IMR-90 (cell line): ENCODE measurements at regions of chr9 and their contacts with region 1.

Region 1: DNA sequence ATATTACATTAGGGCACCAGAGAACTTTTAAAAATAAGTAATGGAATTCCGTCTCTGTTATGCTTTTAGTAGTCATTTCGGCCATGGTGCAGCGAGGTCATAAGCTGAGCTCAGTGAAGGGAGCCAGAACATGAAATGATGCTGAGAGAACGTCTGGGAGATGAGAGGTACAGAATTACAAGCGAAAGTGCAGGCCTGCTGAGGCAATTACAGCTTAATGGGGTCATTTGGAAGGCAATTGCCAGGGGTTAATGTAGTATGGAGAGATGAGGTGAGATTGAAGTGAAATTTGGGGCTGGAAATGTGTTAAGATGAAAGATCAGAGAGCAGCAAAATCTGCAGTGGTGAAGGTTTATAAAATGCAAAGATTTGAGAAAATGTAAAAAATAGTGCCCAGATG is 96.5 kb downstream of the PBX3 start:
- DNase-seq: peak; percentile 60
- ATAC-seq: 0 out of 2 replicates have a peak, but pooled peaks have one; percentile 61
- H3K4me3 ChIP-seq: no peak overlapping the region
- H3K27ac ChIP-seq: no peak overlapping the region
- H3K4me1 ChIP-seq: no peaks in the 10 kb centered on the region
- H3K27me3 ChIP-seq: no peaks in the 10 kb centered on the region
- CTCF ChIP-seq: no peak
- POLR2A ChIP-seq: no peak
- RAD21 ChIP-seq: no peak

Region 2: DNA sequence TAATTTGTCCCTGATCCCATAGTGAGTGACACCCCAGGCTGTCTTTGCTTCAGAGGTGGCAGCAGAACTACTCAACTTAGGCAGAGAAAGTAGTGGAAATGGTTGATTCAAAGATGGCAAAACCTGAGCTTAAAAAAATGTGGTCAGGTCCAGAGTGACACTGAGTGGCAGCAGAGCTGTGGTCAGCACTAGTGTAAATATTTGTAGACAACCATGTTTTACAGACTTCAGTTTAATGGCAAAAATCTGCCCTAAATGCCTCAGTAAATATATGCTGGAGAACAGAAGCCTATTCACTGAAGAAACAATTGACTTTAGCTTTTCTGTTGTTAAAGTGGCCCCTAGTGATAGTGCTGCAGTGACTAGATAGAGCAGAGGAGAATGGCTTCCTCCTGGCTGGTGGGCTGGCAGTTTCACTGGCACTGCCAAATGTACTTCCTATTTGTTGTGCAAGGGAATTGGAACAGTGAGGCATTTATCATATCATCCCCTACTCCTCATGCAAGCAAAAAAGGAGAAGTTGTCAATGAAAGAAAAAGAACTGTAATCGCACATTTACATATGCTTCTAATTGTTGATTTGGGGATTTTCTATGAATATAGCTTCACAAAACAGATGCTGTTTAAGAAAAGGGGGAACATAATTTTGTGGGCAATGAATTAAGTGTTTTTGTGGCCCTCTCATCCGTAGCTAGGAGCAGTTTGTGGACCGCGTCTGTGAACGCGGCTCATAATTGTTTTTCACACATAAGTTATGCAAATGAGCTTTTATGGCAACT is 84.5 kb before region 1 on chr9:
- CTCF ChIA-PET with region 1: no interaction called
- POLR2A ChIA-PET with region 1: no interaction called
- dilution Hi-C with region 1: no loop called
- in situ Hi-C with region 1: no loop called
- intact Hi-C with region 1: loop called (anchors 5 kb)
- DNase-seq: no peak
- ATAC-seq: peak; percentile 54
- H3K4me3 ChIP-seq: no peak overlapping the region
- H3K27ac ChIP-seq: no peak overlapping the region
- H3K4me1 ChIP-seq: peaks cover 10% of the 10 kb centered on the region
- H3K27me3 ChIP-seq: no peaks in the 10 kb centered on the region
- CTCF ChIP-seq: no peak
- POLR2A ChIP-seq: no peak
- RAD21 ChIP-seq: no peak

Region 3: DNA sequence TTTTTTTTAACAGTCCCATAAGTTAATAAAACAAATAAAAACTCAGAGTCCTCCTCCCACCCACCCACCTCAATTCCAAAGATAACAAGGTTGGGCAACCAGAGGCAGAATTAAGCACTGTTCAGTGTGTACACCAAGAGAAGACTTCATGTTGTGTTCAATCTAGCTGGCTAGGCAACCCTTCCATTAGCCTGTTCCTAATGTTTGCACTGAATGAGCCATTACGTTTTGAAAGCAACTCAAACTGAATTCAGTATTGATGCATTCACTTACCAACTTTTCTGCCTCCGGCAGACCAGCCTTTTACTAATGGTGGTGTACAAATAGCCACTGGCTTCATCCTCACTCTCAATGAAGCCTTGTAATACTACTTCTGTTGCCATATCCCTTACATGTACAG is 48.9 kb before region 1 on chr9:
- CTCF ChIA-PET with region 1: no interaction called
- POLR2A ChIA-PET with region 1: no interaction called
- dilution Hi-C with region 1: no loop called
- in situ Hi-C with region 1: no loop called
- intact Hi-C with region 1: loop called (anchors 5 kb)
- DNase-seq: no peak
- ATAC-seq: no peak
- H3K4me3 ChIP-seq: no peak overlapping the region
- H3K27ac ChIP-seq: no peak overlapping the region
- H3K4me1 ChIP-seq: no peaks in the 10 kb centered on the region
- H3K27me3 ChIP-seq: no peaks in the 10 kb centered on the region
- CTCF ChIP-seq: no peak
- POLR2A ChIP-seq: no peak
- RAD21 ChIP-seq: no peak

Region 4: GRCh38 chr9:125883565-125884217 is 40.0 kb after region 1 on chr9:
- CTCF ChIA-PET with region 1: no interaction called
- POLR2A ChIA-PET with region 1: no interaction called
- dilution Hi-C with region 1: no loop called
- in situ Hi-C with region 1: no loop called
- intact Hi-C with region 1: loop called (anchors 5 kb)
- DNase-seq: no peak
- ATAC-seq: no peak
- H3K4me3 ChIP-seq: no peak overlapping the region
- H3K27ac ChIP-seq: no peak overlapping the region
- H3K4me1 ChIP-seq: peaks cover 5% of the 10 kb centered on the region
- H3K27me3 ChIP-seq: no peaks in the 10 kb centered on the region
- CTCF ChIP-seq: no peak
- POLR2A ChIP-seq: no peak
- RAD21 ChIP-seq: no peak

Region 5: GRCh38 chr9:127495906-127496421 is 1652.3 kb after region 1 on chr9:
- CTCF ChIA-PET with region 1: no interaction called
- POLR2A ChIA-PET with region 1: no interaction called
- dilution Hi-C with region 1: no loop called
- in situ Hi-C with region 1: no loop called
- intact Hi-C with region 1: no loop called
- DNase-seq: no peak
- ATAC-seq: no peak
- H3K4me3 ChIP-seq: no peak overlapping the region
- H3K27ac ChIP-seq: no peak overlapping the region
- H3K4me1 ChIP-seq: peaks cover 9% of the 10 kb centered on the region
- H3K27me3 ChIP-seq: no peaks in the 10 kb centered on the region
- CTCF ChIP-seq: no peak
- POLR2A ChIP-seq: no peak
- RAD21 ChIP-seq: no peak